ENCODE measurements at regions of chr2 and their contacts with region 1.

Region 1: DNA sequence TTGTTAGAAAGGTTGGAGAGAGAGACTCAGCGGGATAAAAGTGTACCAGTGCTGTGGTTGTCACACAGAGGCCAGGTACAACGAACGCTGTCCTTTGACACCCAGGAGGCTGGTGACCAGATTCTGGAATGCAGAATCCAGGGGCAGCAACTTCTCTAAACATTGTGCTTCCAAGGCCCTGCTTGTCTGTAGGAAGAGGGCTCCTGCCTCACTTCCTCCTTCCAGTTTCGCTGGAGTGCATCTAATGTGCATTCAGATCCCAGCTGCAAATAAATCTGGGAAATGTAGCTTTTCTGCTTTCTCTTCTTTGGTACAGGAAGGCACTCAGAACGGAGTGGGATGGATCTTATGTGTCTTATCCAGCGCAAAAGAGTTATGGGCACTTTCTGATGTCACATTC is 171.8 kb upstream of the ATP5MC3 start:
- DNase-seq: no peak
- ATAC-seq: no peak
- H3K4me3 ChIP-seq: no peak overlapping the region
- H3K27ac ChIP-seq: no peak overlapping the region
- H3K4me1 ChIP-seq: no peaks in the 10 kb centered on the region
- H3K27me3 ChIP-seq: peaks cover 0 to 12% (median 0%) of the 10 kb centered on the region in 4 donors
- CTCF ChIP-seq: no peak

Region 2: GRCh38 chr2:174901075-174901474 is 452.2 kb before region 1 on chr2:
- intact Hi-C with region 1: no loop called
- DNase-seq: no peak
- ATAC-seq: peak in 2 of 4 donors; percentile 36 to 60
- H3K4me3 ChIP-seq: no peak overlapping the region
- H3K27ac ChIP-seq: no peak overlapping the region
- H3K4me1 ChIP-seq: peaks cover 0 to 3% (median 0%) of the 10 kb centered on the region in 3 donors
- H3K27me3 ChIP-seq: no peaks in the 10 kb centered on the region
- CTCF ChIP-seq: no peak

Region 3: GRCh38 chr2:176106581-176107539 is 753.6 kb after region 1 on chr2 and contains the start of gene HOXD11:
- intact Hi-C with region 1: loop called in 1 of 3 experiments (anchors 10 kb)
- DNase-seq: no peak
- ATAC-seq: peak in 3 of 4 donors; percentile 44 to 64 (median 53)
- H3K4me3 ChIP-seq: peak within 1 kb of the TSS in 1 of 4 donors; percentile 23
- H3K27ac ChIP-seq: no peak within 1 kb of the TSS
- H3K4me1 ChIP-seq: peaks cover 0 to 4% (median 0%) of the 10 kb centered on the region in 3 donors
- H3K27me3 ChIP-seq: peaks cover 10 to 81% (median 32%) of the 10 kb centered on the region in 4 donors
- CTCF ChIP-seq: no peak
- total RNA-seq, gene HOXD11: not detected